Activated T-helper 1 cell treated with anti-CD3 and anti-CD28 coated beads, Interleukin-12 subunit alpha, Interleukin-12 subunit beta, Interleukin-2, Interleukin-4 antibody, amounts not matched to agents 30 ng/mL and 10 ng/mL and 1 ng/mL, durations not matched to agents 14 hours and 24 hours and 36 hours (primary cell): ENCODE measurements at regions of chr2 and their contacts with region 1.

Region 1: DNA sequence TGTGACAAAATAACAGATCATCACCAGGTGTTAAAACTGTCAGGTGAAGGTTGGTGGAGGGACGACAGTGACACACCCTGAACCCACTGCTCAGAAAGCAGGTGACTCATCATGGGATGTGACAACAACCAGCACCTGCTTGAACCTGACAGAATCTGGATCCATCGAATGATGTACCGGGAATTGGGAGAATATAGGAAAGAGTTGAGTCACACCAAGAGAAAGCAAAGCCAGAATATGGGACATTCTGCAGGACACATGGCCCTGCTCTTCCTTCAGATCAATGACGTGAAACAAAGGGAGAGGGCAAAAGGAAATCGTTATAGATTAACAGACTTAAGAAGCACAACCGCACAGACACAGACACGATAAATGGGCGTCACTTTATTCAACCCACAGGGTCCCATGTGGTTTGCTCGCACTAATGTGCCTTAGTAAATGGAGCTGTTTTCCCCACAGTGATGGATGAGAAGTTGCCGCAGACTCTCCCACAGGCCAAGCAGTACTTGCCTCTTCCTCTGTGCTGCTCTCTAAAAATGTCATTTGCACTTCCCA is 100.1 kb downstream of the CRACDL start:
- DNase-seq: peak; percentile 24
- H3K4me3 Mint-ChIP-seq: peak overlapping the region; percentile 38
- H3K27ac Mint-ChIP-seq: peak overlapping the region; percentile 56
- H3K4me1 Mint-ChIP-seq: peaks cover 53% of the 10 kb centered on the region
- H3K27me3 Mint-ChIP-seq: peaks cover 6% of the 10 kb centered on the region

Region 2: DNA sequence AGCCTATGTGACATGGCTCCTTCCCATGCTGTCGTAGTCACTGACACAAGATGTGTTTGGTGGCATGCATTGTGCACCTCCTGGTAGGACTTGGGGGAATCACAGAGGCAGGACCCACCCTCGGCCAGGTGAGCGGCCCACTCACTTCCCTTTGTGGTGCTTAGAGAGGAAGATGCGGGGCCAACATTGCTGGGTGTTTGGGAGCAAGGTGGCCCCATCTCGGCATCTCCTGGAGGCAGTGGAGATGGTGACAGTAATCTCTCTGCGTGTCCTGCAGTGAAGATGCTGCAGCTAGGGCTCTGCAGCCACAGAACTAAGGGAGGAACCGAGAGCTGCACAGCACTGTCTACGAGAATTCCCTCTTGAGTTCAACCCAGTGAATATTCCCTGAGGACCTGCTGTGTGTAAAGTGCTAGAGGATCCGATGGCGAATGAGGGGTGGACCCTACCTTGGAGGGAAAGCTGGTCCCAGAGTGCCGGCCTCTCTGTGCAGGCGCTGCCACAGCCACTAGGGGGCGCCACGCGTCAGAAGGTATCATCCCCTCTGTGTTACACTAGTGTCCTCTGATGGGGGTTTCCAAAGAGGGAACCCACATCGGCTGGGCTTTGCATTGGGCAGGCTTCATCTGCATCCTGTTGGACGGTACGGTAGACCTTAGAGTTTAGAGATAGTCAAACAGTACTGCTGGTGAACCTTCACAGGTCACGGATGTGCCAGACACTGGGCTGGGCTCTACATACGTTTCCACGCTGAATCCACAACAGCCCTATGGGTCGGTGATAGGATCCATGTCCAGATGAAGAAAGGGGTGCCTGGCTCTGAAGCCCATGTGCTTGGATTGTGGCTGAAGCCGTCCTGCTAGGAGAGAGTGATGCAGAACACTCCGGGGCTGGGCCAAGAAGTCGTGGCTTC is 266.8 kb before region 1 on chr2:
- intact Hi-C with region 1: loop called (anchors 1 kb)
- DNase-seq: peak; percentile 44
- H3K4me3 Mint-ChIP-seq: no peak overlapping the region
- H3K27ac Mint-ChIP-seq: peak overlapping the region; percentile 24
- H3K4me1 Mint-ChIP-seq: peaks cover 12% of the 10 kb centered on the region
- H3K27me3 Mint-ChIP-seq: no peaks in the 10 kb centered on the region

Region 3: DNA sequence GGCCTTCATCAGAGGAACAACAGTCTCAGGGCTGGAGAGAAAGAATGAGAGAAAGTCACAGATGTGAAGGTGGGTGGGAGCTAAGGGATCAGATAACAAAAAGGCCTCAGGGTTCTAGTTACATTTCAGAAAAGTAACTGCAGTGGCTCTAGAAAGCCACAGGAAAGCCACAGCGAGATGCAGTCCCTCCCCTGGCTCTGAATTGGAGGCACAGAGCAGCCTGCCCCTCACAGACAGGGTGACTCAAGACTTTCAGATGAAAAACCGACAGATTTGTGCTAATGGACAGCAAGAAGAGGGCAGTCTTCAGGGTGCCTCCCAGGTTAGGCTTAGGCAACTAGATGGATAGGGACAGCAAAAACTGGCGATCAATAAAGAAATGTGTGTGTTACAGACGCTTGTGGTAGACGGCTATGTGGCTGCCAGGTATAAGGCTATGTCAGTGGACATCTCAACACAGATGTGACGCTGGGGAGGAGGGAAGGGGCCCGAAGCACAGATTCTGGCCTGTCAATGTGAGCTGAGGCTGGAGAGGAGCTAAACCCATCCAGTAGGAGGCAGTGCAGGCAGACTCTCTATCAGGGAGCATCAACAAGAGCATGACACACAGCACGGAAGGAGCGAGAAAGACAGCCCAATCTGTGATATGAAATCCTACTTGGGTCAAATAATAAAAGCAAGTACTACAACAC is 201.4 kb before region 1 on chr2:
- intact Hi-C with region 1: loop called (anchors 1 kb)
- DNase-seq: peak; percentile 26
- H3K4me3 Mint-ChIP-seq: peak overlapping the region; percentile 30
- H3K27ac Mint-ChIP-seq: peak overlapping the region; percentile 70
- H3K4me1 Mint-ChIP-seq: peaks cover 40% of the 10 kb centered on the region
- H3K27me3 Mint-ChIP-seq: no peaks in the 10 kb centered on the region

Region 4: GRCh38 chr2:98649135-98649991 is 186.5 kb before region 1 on chr2:
- intact Hi-C with region 1: loop called (anchors 1 kb)
- DNase-seq: peak; percentile 70
- H3K4me3 Mint-ChIP-seq: no peak overlapping the region
- H3K27ac Mint-ChIP-seq: peak overlapping the region; percentile 2
- H3K4me1 Mint-ChIP-seq: peaks cover 51% of the 10 kb centered on the region
- H3K27me3 Mint-ChIP-seq: no peaks in the 10 kb centered on the region

Region 5: DNA sequence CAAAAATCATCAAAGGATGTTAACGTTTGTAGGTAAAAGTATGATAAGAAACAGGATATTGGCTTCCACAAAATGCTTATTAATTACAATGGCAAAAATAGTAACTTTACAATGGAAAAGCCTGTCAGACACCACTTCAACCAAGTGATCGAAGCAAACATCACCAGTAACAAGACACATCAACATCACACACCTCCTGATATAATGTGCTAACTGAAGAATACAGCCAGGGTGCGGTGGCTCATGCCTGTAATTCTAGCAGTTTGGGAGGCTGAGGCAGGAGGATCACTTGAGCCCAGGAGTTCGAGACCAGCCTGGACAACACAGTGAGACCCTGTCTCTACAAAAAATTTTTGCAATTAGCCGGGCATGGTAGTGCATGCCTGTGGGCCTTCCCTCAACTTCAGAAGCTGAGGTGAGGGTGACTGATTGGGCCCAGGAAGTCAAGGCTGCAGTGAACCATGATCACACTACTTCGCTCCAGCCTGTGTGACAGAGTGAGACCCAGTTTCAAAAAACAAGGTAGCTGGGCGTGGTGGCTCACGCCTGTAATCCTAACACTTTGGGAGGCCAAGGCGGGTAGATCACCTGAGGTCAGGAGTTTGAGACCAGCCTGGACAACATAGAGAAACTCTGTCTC is 120.0 kb before region 1 on chr2:
- intact Hi-C with region 1: no loop called
- DNase-seq: no peak
- H3K4me3 Mint-ChIP-seq: no peak overlapping the region
- H3K27ac Mint-ChIP-seq: peak overlapping the region; percentile 19
- H3K4me1 Mint-ChIP-seq: peaks cover 77% of the 10 kb centered on the region
- H3K27me3 Mint-ChIP-seq: no peaks in the 10 kb centered on the region

Region 6: DNA sequence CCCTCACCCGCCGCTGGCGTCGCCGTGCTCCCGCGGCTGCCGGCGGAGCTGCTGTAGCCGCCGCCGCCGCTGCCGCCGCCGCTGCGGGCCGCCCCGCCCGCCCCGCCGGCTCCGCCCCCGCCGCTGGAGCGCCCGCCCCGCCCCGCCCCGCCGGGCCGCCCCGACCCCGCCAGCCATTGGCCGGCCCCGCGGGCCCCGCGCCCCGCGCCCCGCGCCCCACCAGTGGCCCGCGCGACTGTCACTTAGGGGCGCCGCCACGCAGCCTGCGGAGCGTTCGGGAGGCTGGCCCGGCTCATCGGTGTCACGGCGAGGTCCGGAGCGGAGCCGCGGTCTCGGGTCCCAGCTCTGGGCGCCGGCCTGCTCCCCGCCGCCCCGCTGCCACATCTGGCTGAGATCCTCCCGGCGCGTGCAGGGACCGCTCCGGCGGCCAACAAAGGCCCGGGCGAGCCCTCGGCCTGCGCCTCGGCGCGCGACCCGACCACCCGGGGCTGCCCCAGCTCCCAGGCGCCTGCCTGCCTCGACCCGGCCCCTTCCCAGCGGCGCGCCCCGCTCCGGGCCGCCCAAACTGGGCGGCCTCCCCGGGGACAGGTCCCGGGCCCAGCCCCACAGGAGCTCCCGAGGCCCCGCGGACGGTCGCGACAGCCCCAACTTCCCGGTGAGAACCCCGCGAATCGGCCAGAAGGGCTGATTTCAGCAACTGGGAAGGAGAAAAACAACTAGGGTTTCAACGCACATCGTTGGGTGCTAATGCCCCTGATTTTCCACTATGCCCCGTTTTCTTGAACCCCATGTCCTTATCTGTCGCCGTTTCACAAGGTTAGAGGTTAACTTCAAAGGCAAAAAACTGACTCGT is 104.6 kb before region 1 on chr2 and contains the start of gene MGAT4A:
- intact Hi-C with region 1: loop called (anchors 1 kb)
- DNase-seq: peak; percentile 82
- H3K4me3 Mint-ChIP-seq: peak within 1 kb of the TSS; percentile 91
- H3K27ac Mint-ChIP-seq: peak within 1 kb of the TSS; percentile 87
- H3K4me1 Mint-ChIP-seq: peaks cover 80% of the 10 kb centered on the region
- H3K27me3 Mint-ChIP-seq: no peaks in the 10 kb centered on the region
- total RNA-seq, gene MGAT4A: 47.0 and 49.7 TPM in 2 replicates

Region 7: GRCh38 chr2:99066075-99066958 is 230.4 kb after region 1 on chr2:
- intact Hi-C with region 1: loop called (anchors 1 kb)
- DNase-seq: peak; percentile 6
- H3K4me3 Mint-ChIP-seq: no peak overlapping the region
- H3K27ac Mint-ChIP-seq: no peak overlapping the region
- H3K4me1 Mint-ChIP-seq: no peaks in the 10 kb centered on the region
- H3K27me3 Mint-ChIP-seq: peaks cover 6% of the 10 kb centered on the region